ENCODE measurements at regions of chr1 and their contacts with region 1.

Region 1: GRCh38 chr1:78799926-78800325 is 150.3 kb downstream of the IFI44 start:
- DNase-seq: no peak
- ATAC-seq: no peak
- H3K4me3 ChIP-seq: no peak overlapping the region
- H3K27ac ChIP-seq: no peak overlapping the region
- H3K4me1 ChIP-seq: no peaks in the 10 kb centered on the region
- H3K27me3 ChIP-seq: no peaks in the 10 kb centered on the region
- CTCF ChIP-seq: no peak
- POLR2A ChIP-seq: no peak
- RAD21 ChIP-seq: no peak

Region 2: DNA sequence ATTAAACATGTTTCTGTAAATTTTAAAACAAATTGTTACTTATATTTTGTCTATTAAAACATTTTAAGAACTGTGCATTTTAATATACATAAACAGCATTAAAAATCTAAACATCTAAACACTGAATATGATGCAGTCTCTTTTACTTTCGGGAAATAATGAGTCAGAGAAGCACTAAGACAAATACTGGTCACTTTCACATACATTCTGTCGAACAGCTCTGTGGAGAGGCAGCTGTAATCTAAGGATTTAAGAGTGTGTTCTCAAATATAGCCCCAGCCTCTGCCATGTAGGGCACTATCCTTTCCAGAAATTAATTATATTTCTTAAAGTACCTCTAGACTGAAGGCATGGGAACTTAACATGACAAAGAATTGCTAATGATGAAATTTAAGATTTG is 398.8 kb before region 1 on chr1:
- CTCF ChIA-PET with region 1: no interaction called
- POLR2A ChIA-PET with region 1: no interaction called
- dilution Hi-C with region 1: no loop called
- in situ Hi-C with region 1: no loop called
- intact Hi-C with region 1: loop called (anchors 5 kb)
- DNase-seq: peak; percentile 25
- ATAC-seq: peak; percentile 67
- H3K4me3 ChIP-seq: no peak overlapping the region
- H3K27ac ChIP-seq: no peak overlapping the region
- H3K4me1 ChIP-seq: no peaks in the 10 kb centered on the region
- H3K27me3 ChIP-seq: 0 out of 2 replicates have a peak, but pooled peaks cover 2% of the 10 kb centered on the region
- CTCF ChIP-seq: no peak
- POLR2A ChIP-seq: no peak
- RAD21 ChIP-seq: no peak

Region 3: DNA sequence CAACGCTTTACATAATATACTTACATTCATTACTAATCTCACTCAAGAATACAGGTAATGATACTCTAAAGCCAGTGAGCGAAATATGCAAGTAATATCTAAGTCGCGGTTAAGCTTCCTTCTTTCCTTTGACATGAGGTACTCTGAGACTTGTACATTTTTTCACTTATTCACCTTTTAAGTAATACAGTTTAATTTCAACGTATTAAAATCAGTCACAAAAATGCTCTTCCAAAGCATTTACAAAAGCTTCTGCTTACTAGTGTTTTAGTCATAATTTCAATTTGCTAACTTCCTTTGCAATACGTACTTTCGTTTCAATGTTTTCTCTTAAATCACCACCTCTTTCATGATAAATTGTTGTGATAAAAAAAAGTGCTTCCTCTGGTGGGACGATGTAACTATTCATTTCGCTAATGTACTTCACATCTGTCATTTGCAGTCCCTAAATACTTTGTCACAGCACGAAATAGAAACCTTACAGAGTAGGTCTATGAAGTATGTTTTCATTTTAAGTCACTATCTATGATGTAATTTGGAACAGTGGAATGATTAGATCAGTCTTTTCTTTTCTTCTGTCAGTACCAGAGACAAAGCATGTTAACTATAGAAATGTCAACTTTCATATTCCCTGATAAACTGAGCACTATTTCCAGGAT is 240.6 kb after region 1 on chr1:
- CTCF ChIA-PET with region 1: no interaction called
- POLR2A ChIA-PET with region 1: no interaction called
- dilution Hi-C with region 1: no loop called
- in situ Hi-C with region 1: no loop called
- intact Hi-C with region 1: no loop called
- DNase-seq: peak; percentile 16
- ATAC-seq: peak; percentile 37; the same call in 1 of the 2 replicates
- H3K4me3 ChIP-seq: peak overlapping the region; percentile 61; the same call in 1 of the 2 replicates
- H3K27ac ChIP-seq: no peak overlapping the region; the same call in 1 of the 2 replicates
- H3K4me1 ChIP-seq: peaks cover 4% of the 10 kb centered on the region
- H3K27me3 ChIP-seq: no peaks in the 10 kb centered on the region
- CTCF ChIP-seq: no peak
- POLR2A ChIP-seq: no peak
- RAD21 ChIP-seq: no peak

Region 4: DNA sequence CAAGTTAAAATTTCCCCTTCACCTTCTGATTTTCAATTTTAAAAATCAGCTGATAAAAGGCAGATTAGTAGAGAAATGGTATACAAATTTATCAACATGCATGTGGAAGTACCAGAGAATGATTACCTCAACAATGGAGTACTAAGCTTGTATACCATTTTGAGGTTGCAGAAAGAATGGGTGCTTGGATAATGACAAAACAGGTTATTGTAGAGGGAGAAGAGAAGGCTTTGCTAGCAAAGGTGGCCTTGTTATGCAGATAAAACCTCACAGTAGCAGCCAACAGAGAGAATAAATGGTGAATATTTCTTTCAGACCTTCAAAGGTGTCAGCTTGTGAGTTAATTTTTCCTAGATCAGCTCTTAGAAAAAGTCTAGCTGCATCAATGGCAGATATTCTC is 1381.5 kb after region 1 on chr1:
- CTCF ChIA-PET with region 1: no interaction called
- POLR2A ChIA-PET with region 1: no interaction called
- dilution Hi-C with region 1: no loop called
- in situ Hi-C with region 1: loop called (anchors 25 kb)
- intact Hi-C with region 1: no loop called
- DNase-seq: no peak
- ATAC-seq: no peak
- H3K4me3 ChIP-seq: no peak overlapping the region
- H3K27ac ChIP-seq: no peak overlapping the region
- H3K4me1 ChIP-seq: no peaks in the 10 kb centered on the region
- H3K27me3 ChIP-seq: no peaks in the 10 kb centered on the region
- CTCF ChIP-seq: no peak
- POLR2A ChIP-seq: no peak
- RAD21 ChIP-seq: no peak

Measured in IMR-90 (cell line).